ENCODE measurements at regions of chr4 and their contacts with region 1.

Region 1: DNA sequence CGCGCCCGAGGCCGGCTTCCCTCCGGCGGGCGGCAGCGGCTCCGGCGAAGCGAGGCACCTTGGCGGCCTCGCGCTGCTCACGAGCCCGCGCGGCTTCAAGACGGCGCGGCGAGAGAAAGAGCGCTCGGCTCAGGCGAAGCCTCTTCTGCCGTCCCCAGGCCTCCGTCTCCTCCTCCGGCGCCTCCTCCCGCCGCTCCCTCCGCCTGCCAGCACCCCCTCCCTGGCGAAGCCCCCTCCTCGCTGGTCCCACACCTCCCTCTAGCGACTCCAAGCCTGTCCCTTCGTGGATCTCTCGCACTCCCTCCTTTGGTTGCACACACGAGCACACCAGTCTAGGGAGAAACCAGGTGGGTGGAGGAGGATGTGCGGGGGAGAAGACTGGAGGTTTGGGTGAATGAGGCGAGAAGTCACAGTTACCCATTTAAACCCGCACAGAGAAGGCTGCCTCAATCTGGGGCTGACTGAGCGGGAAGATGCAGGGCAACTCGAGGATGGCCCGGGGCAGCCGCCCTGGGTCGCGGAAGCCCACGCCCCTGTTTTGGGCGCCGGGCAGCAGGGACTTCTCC is at the start of gene CAMK2D:
- DNase-seq: peak; percentile 75
- ATAC-seq: peak; percentile 67
- H3K4me3 ChIP-seq: peak within 1 kb of the TSS; percentile 91
- H3K27ac ChIP-seq: peak within 1 kb of the TSS; percentile 98
- H3K4me1 ChIP-seq: peaks cover 16% of the 10 kb centered on the region
- H3K27me3 ChIP-seq: no peaks in the 10 kb centered on the region
- CTCF ChIP-seq: peak; percentile 55
- total RNA-seq, gene CAMK2D: 14.3 and 15.4 TPM in 2 replicates

Region 2: DNA sequence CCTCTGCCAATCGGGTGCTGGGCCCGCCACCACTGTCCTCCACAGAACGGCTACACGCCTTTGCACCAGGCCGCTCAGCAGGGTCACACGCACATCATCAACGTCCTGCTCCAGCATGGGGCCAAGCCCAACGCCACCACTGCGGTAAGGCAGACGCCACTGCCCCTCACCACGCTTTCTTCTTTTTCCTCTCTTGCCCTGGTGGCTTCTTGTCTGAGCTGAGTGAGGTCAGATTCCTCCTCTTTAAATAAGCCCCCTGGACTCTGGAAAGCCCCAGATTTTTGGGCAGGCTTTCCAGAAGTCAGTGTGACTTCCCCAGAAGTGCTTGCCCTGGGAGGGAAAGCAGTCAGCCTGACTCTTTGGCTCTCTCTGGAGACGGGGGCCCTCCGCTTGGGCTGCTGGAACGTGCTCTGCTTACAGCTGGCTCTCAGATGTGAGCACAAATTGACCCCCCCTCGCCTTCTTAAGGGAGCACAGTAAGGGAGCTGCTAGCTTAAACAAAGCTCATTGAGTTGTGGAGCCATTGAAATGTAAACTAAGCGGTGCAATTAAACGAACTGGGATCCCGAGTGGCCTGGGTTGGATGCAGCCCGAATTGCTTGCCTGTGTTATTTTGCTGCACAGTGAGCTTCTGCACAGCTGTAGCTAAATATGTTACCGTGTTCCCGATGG is 469.2 kb before region 1 on chr4:
- CTCF ChIA-PET with region 1: no interaction called
- POLR2A ChIA-PET with region 1: no interaction called
- intact Hi-C with region 1: loop called (anchors 5 kb)
- DNase-seq: no peak
- ATAC-seq: no peak
- H3K4me3 ChIP-seq: no peak overlapping the region
- H3K27ac ChIP-seq: no peak overlapping the region
- H3K4me1 ChIP-seq: no peaks in the 10 kb centered on the region
- H3K27me3 ChIP-seq: no peaks in the 10 kb centered on the region
- CTCF ChIP-seq: no peak

Region 3: GRCh38 chr4:113445286-113445685 is 316.4 kb before region 1 on chr4:
- CTCF ChIA-PET with region 1: no interaction called
- POLR2A ChIA-PET with region 1: no interaction called
- intact Hi-C with region 1: loop called (anchors 5 kb)
- DNase-seq: peak; percentile 82
- ATAC-seq: peak; percentile 49
- H3K4me3 ChIP-seq: peak overlapping the region; percentile 40; the same call in 1 of the 2 replicates
- H3K27ac ChIP-seq: peak overlapping the region; percentile 100
- H3K4me1 ChIP-seq: peaks cover 30% of the 10 kb centered on the region
- H3K27me3 ChIP-seq: no peaks in the 10 kb centered on the region
- CTCF ChIP-seq: no peak

Region 4: GRCh38 chr4:113547487-113548042 is 214.1 kb before region 1 on chr4:
- CTCF ChIA-PET with region 1: no interaction called
- POLR2A ChIA-PET with region 1: no interaction called
- intact Hi-C with region 1: loop called (anchors 1 kb)
- DNase-seq: peak; percentile 96
- ATAC-seq: peak; percentile 97
- H3K4me3 ChIP-seq: no peak overlapping the region
- H3K27ac ChIP-seq: peak overlapping the region; percentile 31; the same call in 1 of the 2 replicates
- H3K4me1 ChIP-seq: peaks cover 13% of the 10 kb centered on the region
- H3K27me3 ChIP-seq: no peaks in the 10 kb centered on the region
- CTCF ChIP-seq: peak; percentile 91

Region 5: GRCh38 chr4:113645771-113646441 is 115.8 kb before region 1 on chr4:
- CTCF ChIA-PET with region 1: no interaction called
- POLR2A ChIA-PET with region 1: no interaction called
- intact Hi-C with region 1: loop called (anchors 2 kb)
- DNase-seq: peak; percentile 89
- ATAC-seq: peak; percentile 95
- H3K4me3 ChIP-seq: peak overlapping the region; percentile 26; the same call in 1 of the 2 replicates
- H3K27ac ChIP-seq: peak overlapping the region; percentile 72
- H3K4me1 ChIP-seq: peaks cover 33% of the 10 kb centered on the region
- H3K27me3 ChIP-seq: no peaks in the 10 kb centered on the region
- CTCF ChIP-seq: no peak

Region 6: DNA sequence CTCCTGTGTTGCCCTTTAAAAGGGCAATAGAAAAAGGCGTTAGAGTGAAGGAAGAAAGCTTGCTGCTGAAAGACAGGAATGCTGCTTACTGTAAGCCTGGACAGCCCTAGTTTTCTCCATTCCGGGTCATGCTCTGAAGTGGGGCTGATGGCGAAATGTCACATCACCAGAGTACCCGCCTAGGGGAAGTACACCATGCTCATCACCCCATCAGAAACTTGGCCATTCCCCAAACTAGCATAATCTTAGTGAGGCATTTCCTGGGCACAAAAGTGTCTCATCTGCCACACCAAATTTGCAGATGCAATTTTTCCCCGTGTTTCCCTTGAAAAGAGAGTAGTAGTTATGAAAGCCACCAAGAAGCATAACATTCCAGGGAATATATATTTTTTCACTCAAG is 47.6 kb after region 1 on chr4:
- CTCF ChIA-PET with region 1: no interaction called
- POLR2A ChIA-PET with region 1: no interaction called
- intact Hi-C with region 1: no loop called
- DNase-seq: no peak
- ATAC-seq: no peak
- H3K4me3 ChIP-seq: no peak overlapping the region
- H3K27ac ChIP-seq: no peak overlapping the region
- H3K4me1 ChIP-seq: no peaks in the 10 kb centered on the region
- H3K27me3 ChIP-seq: no peaks in the 10 kb centered on the region
- CTCF ChIP-seq: no peak

Region 7: GRCh38 chr4:113849771-113850170 is 88.1 kb after region 1 on chr4:
- CTCF ChIA-PET with region 1: no interaction called
- POLR2A ChIA-PET with region 1: no interaction called
- intact Hi-C with region 1: no loop called
- DNase-seq: no peak
- ATAC-seq: no peak
- H3K4me3 ChIP-seq: no peak overlapping the region
- H3K27ac ChIP-seq: no peak overlapping the region
- H3K4me1 ChIP-seq: no peaks in the 10 kb centered on the region
- H3K27me3 ChIP-seq: no peaks in the 10 kb centered on the region
- CTCF ChIP-seq: no peak

Region 8: DNA sequence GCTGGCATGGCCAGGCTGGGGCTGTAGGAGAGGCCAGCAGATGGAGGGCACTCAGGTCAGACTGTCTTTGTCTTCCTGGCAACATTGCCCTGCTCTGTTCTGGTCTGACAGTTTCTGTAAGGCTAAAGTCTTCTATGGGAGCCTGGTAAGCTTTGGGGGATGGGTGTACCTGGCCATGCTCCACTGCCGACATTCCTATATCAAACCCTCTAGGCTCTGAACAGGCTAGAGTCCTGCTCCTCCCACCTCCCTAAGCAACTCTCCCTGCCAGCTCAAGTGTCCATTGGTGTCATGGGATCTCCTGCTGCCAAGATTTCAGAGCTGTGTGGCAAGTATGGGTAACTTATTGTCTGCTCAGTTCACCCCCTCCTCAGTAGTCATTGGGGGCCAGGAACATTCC is 673.4 kb after region 1 on chr4:
- CTCF ChIA-PET with region 1: no interaction called
- POLR2A ChIA-PET with region 1: no interaction called
- intact Hi-C with region 1: no loop called
- DNase-seq: no peak
- ATAC-seq: no peak
- H3K4me3 ChIP-seq: no peak overlapping the region
- H3K27ac ChIP-seq: no peak overlapping the region
- H3K4me1 ChIP-seq: no peaks in the 10 kb centered on the region
- H3K27me3 ChIP-seq: no peaks in the 10 kb centered on the region
- CTCF ChIP-seq: no peak

Measured in PC-3 (cell line).